Cardiac septum (tissue), 1 donor: ENCODE measurements at regions of chr6 and their contacts with region 1.

Region 1: GRCh38 chr6:44257025-44257752 is at the start of gene SLC35B2:
- DNase-seq: no peak
- total RNA-seq, gene SLC35B2: 23.2 TPM

Region 2: DNA sequence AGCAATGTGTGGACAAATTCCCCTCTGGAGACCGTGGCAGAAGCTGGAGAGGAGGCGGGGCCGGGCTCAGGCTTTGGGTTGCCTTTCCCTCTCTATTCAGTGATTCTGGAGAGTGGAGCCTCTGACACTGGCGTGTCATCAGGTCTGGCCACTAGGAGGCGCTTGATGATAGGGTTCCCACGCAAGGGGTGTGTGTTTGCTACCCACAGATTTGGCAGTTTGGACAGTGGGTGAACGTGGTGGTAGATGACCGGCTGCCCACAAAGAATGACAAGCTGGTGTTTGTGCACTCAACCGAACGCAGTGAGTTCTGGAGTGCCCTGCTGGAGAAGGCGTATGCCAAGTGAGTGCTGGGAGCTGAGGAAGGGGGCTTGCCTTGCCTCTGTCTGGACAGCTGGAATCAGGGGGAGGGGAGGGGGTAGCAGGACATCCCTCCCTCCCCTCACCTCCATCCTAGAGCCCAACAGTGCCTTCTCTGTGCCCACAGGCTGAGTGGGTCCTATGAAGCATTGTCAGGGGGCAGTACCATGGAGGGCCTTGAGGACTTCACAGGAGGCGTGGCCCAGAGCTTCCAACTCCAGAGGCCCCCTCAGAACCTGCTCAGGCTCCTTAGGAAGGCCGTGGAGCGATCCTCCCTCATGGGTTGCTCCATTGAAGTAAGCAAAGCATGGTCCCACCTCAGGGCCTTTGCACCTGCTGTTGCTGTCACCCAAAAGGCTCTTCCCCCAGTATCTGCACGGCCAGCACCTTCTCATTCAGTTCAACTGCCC is 84.3 kb before region 1 on chr6:
- intact Hi-C with region 1: loop called (anchors 2 kb)
- DNase-seq: peak; percentile 89

Region 3: DNA sequence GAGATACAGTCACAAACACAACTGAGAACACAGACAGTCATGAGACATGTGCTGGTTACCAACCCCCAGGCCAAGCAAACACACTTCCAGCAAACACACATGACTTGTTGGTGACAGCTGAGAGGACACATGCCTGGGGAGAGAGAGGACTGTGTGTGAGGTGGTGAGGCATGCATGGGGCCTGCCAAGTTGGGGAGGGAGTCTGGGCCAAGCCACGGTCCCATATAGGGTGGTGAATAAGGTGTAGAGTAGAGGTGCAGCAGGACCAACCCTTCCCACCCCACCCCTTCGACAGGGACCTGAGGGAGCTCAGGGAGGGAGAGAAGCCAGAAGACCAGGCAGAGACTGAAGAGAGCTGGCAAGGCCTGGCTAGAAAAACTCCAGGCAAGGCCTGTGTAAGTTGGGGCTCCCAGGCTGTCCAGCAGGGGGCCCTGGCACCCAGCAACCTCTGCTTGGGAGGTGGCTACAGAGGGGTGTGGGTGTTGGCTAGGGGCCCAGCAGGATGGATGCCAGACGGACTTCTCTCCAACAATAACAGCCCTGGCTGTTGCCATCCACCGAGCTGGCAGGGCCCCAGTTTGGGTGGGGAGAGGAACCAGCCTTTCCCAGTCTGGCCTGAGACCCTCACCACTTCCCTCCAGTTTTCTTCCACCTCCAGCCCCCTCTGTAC is 35.8 kb before region 1 on chr6:
- intact Hi-C with region 1: no loop called
- DNase-seq: peak; percentile 95